ENCODE measurements at regions of chr10 and their contacts with region 1.

Region 1: DNA sequence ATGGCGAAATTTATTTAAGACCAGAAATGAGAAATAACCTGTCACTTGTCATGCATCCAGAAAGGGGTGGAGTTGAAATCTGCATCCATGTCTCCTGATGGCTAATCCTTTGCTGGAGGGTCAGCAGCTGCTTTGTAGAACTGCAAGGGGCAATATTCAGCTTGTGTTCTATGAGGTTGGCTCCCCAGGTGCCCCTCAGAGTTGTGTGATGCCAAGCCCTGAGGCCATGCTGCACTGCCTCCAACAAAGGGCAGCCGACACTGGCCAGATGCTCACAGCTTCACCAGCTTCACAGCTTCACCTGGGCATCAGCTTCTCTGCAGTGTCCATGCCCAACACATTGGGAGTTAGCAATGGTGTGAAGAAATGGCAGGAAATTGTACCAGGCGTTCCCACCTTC is 64.0 kb upstream of the TMEM72 start:
- DNase-seq: no peak
- ATAC-seq: no peak
- H3K4me3 ChIP-seq: no peak overlapping the region
- H3K4me3 Mint-ChIP-seq: no peak overlapping the region
- H3K27ac ChIP-seq: no peak overlapping the region
- H3K27ac Mint-ChIP-seq: no peak overlapping the region
- H3K4me1 ChIP-seq: no peaks in the 10 kb centered on the region
- H3K4me1 Mint-ChIP-seq: no peaks in the 10 kb centered on the region
- H3K27me3 ChIP-seq: no peaks in the 10 kb centered on the region
- H3K27me3 Mint-ChIP-seq: peaks cover 10% of the 10 kb centered on the region
- CTCF ChIP-seq: no peak

Region 2: DNA sequence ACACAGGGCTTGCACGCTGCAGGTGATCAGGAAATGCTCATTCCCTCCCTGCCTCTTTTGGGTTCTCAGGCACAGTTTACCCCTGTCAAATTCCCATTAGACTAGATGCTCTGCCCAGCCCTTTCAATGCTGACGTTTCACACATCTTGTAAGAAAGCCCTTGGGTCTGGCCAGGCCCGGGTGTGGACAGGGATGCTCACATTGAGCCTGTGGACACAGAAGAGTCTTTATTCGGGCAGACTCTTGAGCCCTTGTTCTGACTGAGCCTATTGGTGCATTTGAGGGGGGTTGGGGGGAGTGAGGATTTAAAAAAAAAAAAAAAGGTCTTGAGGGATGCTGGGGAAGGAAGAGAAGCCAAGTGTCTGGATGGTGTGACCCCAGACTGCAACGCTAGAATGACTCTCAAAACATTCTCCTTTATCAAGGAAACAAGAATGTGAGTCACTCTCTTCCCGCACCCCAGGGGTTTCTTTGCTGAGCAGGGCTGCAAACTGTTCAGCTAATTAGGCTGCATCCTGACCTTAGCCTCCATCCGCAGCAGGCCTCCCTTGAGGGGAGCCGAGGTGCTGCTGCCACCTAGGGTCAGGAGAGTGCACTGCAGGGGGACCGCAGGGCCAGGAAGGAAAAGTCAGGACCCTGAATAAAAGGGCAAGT is 10.4 kb after region 1 on chr10:
- CTCF ChIA-PET with region 1: interaction called, 11 read pairs
- POLR2A ChIA-PET with region 1: no interaction called
- intact Hi-C with region 1: no loop called
- DNase-seq: peak; percentile 59
- ATAC-seq: peak; percentile 66
- H3K4me3 ChIP-seq: no peak overlapping the region
- H3K4me3 Mint-ChIP-seq: no peak overlapping the region
- H3K27ac ChIP-seq: no peak overlapping the region
- H3K27ac Mint-ChIP-seq: no peak overlapping the region
- H3K4me1 ChIP-seq: no peaks in the 10 kb centered on the region
- H3K4me1 Mint-ChIP-seq: no peaks in the 10 kb centered on the region
- H3K27me3 ChIP-seq: peaks cover 0 to 4% (median 0%) of the 10 kb centered on the region in 4 experiments
- H3K27me3 Mint-ChIP-seq: peaks cover 16% of the 10 kb centered on the region
- CTCF ChIP-seq: peak; percentile 94